CD8-positive, alpha-beta T cell (primary cell): ENCODE measurements at regions of chr5 and their contacts with region 1.

Region 1: DNA sequence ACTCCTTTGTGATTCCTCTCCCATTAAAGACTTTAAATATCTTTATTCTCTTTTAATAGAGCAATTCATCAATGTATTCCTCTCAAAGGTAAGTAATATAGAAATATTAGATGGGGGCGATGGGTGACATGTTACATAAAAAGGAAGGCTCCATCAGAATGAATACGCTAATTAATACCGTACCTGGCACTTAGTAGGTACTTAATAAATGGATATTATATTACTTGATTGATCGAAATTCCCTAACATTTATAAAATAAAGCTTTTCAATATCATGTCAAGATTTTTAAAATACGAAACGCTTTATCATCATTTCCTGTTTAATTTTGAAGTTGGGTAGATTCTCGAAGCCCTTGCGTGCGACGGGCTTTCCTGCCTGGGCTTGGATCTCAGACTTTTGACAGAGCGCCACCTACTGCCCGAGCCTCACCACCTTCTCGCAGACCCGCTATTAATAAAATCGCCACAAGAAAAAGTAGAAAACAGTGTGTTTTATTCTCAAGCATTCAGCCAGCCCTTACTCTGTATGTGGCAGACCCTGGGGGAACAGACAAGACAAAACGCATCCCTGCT is 99.4 kb downstream of the C5orf15 start:
- DNase-seq: peak; percentile 46 to 83 (median 72)
- ATAC-seq: peak; percentile 74
- H3K4me3 ChIP-seq: no peak overlapping the region
- H3K4me3 Mint-ChIP-seq: no peak overlapping the region
- H3K27ac ChIP-seq: no peak overlapping the region
- H3K27ac Mint-ChIP-seq: no peak overlapping the region
- H3K4me1 ChIP-seq: no peaks in the 10 kb centered on the region
- H3K4me1 Mint-ChIP-seq: peaks cover 4% of the 10 kb centered on the region
- H3K27me3 ChIP-seq: no peaks in the 10 kb centered on the region
- H3K27me3 Mint-ChIP-seq: peaks cover 15% of the 10 kb centered on the region
- CTCF ChIP-seq: peak; percentile 85

Region 2: GRCh38 chr5:133111299-133111698 is 757.7 kb before region 1 on chr5:
- CTCF ChIA-PET with region 1: interaction called, 21 read pairs
- POLR2A ChIA-PET with region 1: no interaction called
- intact Hi-C with region 1: loop called in 1 of 2 experiments (anchors 2 kb)
- DNase-seq: peak; percentile 55 to 89 (median 79)
- ATAC-seq: peak; percentile 62
- H3K4me3 ChIP-seq: no peak overlapping the region
- H3K4me3 Mint-ChIP-seq: peak overlapping the region; percentile 29
- H3K27ac ChIP-seq: no peak overlapping the region
- H3K27ac Mint-ChIP-seq: no peak overlapping the region
- H3K4me1 ChIP-seq: peaks cover 16% of the 10 kb centered on the region
- H3K4me1 Mint-ChIP-seq: peaks cover 25% of the 10 kb centered on the region
- H3K27me3 ChIP-seq: no peaks in the 10 kb centered on the region
- H3K27me3 Mint-ChIP-seq: no peaks in the 10 kb centered on the region
- CTCF ChIP-seq: peak; percentile 84

Region 3: DNA sequence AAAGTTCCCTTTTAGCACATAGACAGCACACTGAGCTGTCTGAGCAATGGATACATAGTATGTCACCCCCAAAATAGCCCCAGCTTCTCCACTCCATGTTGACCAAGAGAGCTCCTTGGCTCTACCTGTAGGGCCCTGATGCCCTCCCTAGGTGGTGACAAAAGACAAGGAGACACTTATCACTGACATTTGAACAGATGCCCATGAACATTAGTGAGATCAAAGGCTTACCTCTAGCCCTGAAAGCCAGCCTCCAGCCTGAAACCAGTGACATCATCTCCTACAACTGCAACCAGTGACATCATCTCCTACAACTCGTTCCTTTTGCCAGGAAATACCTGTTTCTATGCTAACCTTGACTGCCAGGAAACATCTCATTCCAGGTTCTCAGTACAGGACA is 379.4 kb before region 1 on chr5:
- CTCF ChIA-PET with region 1: no interaction called
- POLR2A ChIA-PET with region 1: no interaction called
- intact Hi-C with region 1: loop called in 1 of 2 experiments (anchors 2 kb)
- DNase-seq: peak in 2 of 9 experiments; percentile 10 to 32
- ATAC-seq: no peak
- H3K4me3 ChIP-seq: no peak overlapping the region
- H3K4me3 Mint-ChIP-seq: no peak overlapping the region
- H3K27ac ChIP-seq: no peak overlapping the region
- H3K27ac Mint-ChIP-seq: no peak overlapping the region
- H3K4me1 ChIP-seq: no peaks in the 10 kb centered on the region
- H3K4me1 Mint-ChIP-seq: no peaks in the 10 kb centered on the region
- H3K27me3 ChIP-seq: no peaks in the 10 kb centered on the region
- H3K27me3 Mint-ChIP-seq: no peaks in the 10 kb centered on the region
- CTCF ChIP-seq: no peak

Region 4: GRCh38 chr5:133698646-133699526 is 170.1 kb before region 1 on chr5:
- CTCF ChIA-PET with region 1: no interaction called
- POLR2A ChIA-PET with region 1: no interaction called
- intact Hi-C with region 1: no loop called
- DNase-seq: peak in 1 of 9 experiments; percentile 37
- ATAC-seq: no peak
- H3K4me3 ChIP-seq: no peak overlapping the region
- H3K4me3 Mint-ChIP-seq: no peak overlapping the region
- H3K27ac ChIP-seq: no peak overlapping the region
- H3K27ac Mint-ChIP-seq: no peak overlapping the region
- H3K4me1 ChIP-seq: no peaks in the 10 kb centered on the region
- H3K4me1 Mint-ChIP-seq: peaks cover 9% of the 10 kb centered on the region
- H3K27me3 ChIP-seq: no peaks in the 10 kb centered on the region
- H3K27me3 Mint-ChIP-seq: peaks cover 5% of the 10 kb centered on the region
- CTCF ChIP-seq: no peak

Region 5: GRCh38 chr5:133754575-133755169 is 114.4 kb before region 1 on chr5:
- CTCF ChIA-PET with region 1: interaction called, 28 read pairs
- POLR2A ChIA-PET with region 1: no interaction called
- intact Hi-C with region 1: loop called (anchors 1 kb)
- DNase-seq: peak in 3 of 9 experiments; percentile 10 to 43 (median 30)
- ATAC-seq: no peak
- H3K4me3 ChIP-seq: no peak overlapping the region
- H3K4me3 Mint-ChIP-seq: no peak overlapping the region
- H3K27ac ChIP-seq: no peak overlapping the region
- H3K27ac Mint-ChIP-seq: no peak overlapping the region
- H3K4me1 ChIP-seq: no peaks in the 10 kb centered on the region
- H3K4me1 Mint-ChIP-seq: no peaks in the 10 kb centered on the region
- H3K27me3 ChIP-seq: no peaks in the 10 kb centered on the region
- H3K27me3 Mint-ChIP-seq: peaks cover 15% of the 10 kb centered on the region
- CTCF ChIP-seq: peak; percentile 45

Region 6: GRCh38 chr5:133831491-133832224 is 37.4 kb before region 1 on chr5:
- CTCF ChIA-PET with region 1: interaction called, 10 read pairs
- POLR2A ChIA-PET with region 1: no interaction called
- intact Hi-C with region 1: no loop called
- DNase-seq: no peak
- ATAC-seq: no peak
- H3K4me3 ChIP-seq: no peak overlapping the region
- H3K4me3 Mint-ChIP-seq: no peak overlapping the region
- H3K27ac ChIP-seq: no peak overlapping the region
- H3K27ac Mint-ChIP-seq: no peak overlapping the region
- H3K4me1 ChIP-seq: peaks cover 4% of the 10 kb centered on the region
- H3K4me1 Mint-ChIP-seq: peaks cover 10% of the 10 kb centered on the region
- H3K27me3 ChIP-seq: no peaks in the 10 kb centered on the region
- H3K27me3 Mint-ChIP-seq: peaks cover under 1% of the 10 kb centered on the region
- CTCF ChIP-seq: no peak

Region 7: GRCh38 chr5:133892774-133893173 is 23.7 kb after region 1 on chr5:
- CTCF ChIA-PET with region 1: interaction called, 15 read pairs
- POLR2A ChIA-PET with region 1: no interaction called
- intact Hi-C with region 1: no loop called
- DNase-seq: no peak
- ATAC-seq: no peak
- H3K4me3 ChIP-seq: no peak overlapping the region
- H3K4me3 Mint-ChIP-seq: no peak overlapping the region
- H3K27ac ChIP-seq: no peak overlapping the region
- H3K27ac Mint-ChIP-seq: no peak overlapping the region
- H3K4me1 ChIP-seq: no peaks in the 10 kb centered on the region
- H3K4me1 Mint-ChIP-seq: no peaks in the 10 kb centered on the region
- H3K27me3 ChIP-seq: no peaks in the 10 kb centered on the region
- H3K27me3 Mint-ChIP-seq: no peaks in the 10 kb centered on the region
- CTCF ChIP-seq: no peak

Region 8: DNA sequence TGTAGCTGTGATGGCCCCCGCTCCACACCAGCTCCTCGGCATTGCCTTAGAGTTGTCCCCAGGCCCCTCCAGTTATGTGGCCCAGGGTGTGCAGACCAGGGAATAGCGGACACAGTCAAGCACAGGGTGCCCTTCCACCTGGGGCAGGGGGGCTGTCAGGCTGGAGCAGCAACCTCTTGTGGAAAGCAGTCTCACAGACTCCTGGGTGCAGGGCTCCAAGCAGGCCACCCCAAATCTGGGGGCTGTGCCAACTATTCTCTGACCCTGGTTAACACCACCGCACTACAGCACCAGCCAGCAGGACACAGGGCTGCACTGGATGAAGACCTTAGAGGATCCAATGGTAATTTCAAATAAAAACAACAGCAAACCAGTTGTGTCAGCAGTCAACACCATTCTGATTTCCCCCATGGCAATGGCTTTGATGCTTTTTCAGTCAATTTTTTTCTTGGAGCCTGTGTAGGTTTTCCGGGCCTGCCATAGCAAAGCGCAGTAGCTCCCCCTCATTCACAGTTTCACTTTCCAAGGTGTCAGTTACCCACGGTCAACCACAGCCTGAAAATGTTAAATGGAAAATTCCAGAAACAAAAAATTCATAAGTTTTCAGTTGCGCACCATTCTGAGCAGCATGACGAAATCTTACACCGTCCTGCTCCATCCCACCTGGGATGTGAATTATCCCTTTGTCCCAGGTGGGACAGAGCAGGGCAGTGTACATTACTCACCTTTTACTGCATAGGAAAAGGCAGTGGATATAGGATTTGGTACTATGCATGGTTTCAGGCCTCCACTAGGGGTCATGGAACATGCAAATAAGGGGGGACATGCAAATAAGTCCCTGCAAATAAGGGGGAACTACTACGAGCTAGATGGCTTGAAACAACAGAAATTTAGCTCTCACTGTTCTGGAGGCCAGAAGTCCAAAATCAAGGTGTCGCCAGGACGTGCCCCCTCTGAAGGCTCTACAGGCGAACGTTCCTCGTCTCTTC is 50.4 kb after region 1 on chr5:
- CTCF ChIA-PET with region 1: no interaction called
- POLR2A ChIA-PET with region 1: no interaction called
- intact Hi-C with region 1: no loop called
- DNase-seq: no peak
- ATAC-seq: no peak
- H3K4me3 ChIP-seq: no peak overlapping the region
- H3K4me3 Mint-ChIP-seq: no peak overlapping the region
- H3K27ac ChIP-seq: no peak overlapping the region
- H3K27ac Mint-ChIP-seq: no peak overlapping the region
- H3K4me1 ChIP-seq: no peaks in the 10 kb centered on the region
- H3K4me1 Mint-ChIP-seq: no peaks in the 10 kb centered on the region
- H3K27me3 ChIP-seq: no peaks in the 10 kb centered on the region
- H3K27me3 Mint-ChIP-seq: peaks cover 3% of the 10 kb centered on the region
- CTCF ChIP-seq: no peak

Region 9: DNA sequence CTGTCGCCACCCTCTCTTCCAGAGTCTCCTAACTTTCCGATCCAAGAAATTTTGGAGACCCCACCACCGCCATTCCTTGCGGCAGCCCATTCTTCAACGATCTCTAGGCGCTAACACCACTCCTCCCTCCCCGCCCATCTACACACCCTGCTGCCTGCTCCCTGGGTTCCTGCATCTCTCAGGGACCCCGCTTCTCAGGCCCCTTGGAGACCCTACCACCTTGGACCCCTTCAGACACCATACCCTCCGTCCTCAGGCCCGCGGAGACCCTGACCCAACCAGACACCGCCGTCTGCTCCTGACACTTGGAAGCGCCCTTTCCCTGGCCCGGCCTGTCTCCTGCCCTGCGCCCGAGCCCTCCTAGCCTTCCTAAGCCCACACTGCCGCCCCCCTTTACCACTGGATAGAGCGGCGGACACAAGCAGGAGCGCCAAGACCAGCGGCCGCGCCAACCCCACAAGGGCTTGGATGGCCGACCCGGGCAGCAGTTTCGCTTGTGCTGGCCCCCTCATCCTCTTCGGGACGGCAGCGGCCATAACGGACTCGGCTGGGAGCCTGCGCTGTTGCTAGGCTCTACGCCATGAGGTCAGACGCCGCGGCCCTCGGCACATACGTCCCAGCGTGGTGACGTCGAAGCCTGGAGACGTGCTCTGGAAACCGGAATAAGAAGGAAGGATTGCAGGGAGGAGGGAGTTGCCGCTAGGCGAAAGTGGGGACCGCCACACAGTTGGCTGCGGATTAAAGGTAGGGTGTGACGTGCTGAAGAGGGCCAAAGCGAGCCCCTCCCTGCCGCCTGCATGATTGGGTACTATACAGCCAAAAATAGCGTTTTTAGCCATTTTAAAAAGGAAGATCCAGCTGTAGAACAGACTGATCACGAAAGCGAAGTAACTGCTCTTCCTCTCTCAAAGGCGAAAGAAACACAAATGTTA is 99.3 kb after region 1 on chr5 and contains the start of gene C5orf15:
- CTCF ChIA-PET with region 1: no interaction called
- POLR2A ChIA-PET with region 1: no interaction called
- intact Hi-C with region 1: no loop called
- DNase-seq: peak; percentile 76 to 98 (median 91)
- ATAC-seq: peak; percentile 93
- H3K4me3 ChIP-seq: peak within 1 kb of the TSS; percentile 85 to 93
- H3K4me3 Mint-ChIP-seq: peak within 1 kb of the TSS; percentile 93
- H3K27ac ChIP-seq: peak within 1 kb of the TSS; percentile 79 to 94
- H3K27ac Mint-ChIP-seq: peak within 1 kb of the TSS; percentile 97
- H3K4me1 ChIP-seq: peaks cover 23% of the 10 kb centered on the region
- H3K4me1 Mint-ChIP-seq: peaks cover 49% of the 10 kb centered on the region
- H3K27me3 ChIP-seq: no peaks in the 10 kb centered on the region
- H3K27me3 Mint-ChIP-seq: no peaks in the 10 kb centered on the region
- CTCF ChIP-seq: no peak
- total RNA-seq, gene C5orf15: 12.4 to 13.0 TPM